ENCODE measurements at regions of chrX and their contacts with region 1.

Region 1: GRCh38 chrX:57918750-57919436 is 8.6 kb upstream of the ZXDA start:
- DNase-seq: no peak

Region 2: DNA sequence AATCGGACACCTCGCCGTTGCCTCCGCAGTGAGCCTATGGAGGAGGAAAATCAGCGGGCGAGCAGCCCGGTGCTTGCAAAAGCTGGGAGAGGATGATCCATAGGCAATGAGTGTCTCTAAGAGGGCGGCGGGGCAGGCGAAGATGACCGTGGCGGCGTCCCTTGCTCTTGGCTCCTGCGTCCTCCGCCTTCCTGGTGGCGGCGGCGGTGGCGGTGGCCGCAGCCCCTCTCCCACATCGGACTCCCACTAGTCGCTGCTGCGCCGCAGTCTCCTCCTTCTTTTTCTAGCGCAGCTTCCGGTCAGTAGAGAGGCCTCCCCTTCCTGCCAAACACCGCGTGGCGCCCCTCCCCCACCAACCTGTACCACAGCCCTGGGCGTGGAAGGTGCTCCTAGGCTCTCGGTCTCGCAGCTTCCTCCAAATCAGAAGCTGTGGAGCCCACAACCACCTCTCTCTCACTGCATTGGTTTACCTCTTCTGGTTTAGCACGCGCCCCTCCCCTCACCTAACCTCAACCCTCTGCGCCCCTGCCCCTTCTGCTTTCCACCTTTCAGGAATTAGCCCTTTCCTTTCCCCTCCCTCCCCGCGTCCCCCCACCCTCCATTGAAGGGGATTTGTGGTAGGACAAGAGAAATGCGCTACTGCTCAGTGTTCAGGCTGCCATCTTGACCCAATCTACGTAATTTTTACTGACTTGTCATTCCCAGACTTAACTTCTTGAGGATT is 923.5 kb before region 1 on chrX and contains the start of gene SPIN3:
- intact Hi-C with region 1: no loop called
- DNase-seq: peak; percentile 90
- total RNA-seq, gene SPIN3: 7.6 to 13.8 TPM

Region 3: DNA sequence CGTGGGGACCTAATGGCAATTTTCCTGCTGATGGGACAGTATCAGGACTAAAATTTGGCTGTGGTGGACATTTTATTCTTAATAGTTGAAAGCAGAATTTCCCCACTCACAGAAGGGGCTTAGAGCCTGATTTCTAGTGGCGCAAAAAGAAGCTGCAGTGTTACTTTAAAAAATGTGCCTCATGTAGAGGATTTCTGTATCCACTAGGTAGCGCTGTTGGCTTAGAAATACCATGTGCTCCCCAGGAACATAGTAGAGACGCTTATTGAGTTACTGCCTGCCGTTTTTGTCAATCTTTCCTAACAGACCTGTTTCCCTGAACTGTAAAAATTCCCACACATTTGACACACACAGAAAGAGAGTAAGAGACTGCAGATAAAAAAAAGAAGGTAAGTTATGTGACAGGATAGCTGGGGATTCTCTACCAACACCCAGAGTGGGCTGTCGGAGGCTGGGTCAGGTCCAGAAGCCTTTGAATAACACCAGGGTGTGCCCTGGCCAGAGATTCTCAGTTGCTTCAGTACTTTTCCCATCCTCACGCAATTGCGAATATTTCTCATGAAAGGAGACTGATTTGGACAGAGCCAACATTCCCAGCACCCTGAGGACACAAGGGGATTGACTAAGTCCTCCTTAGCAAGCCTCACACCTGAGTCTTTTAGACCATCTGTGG is 97.1 kb before region 1 on chrX:
- intact Hi-C with region 1: loop called (anchors 5 to 10 kb)
- DNase-seq: no peak

Region 4: DNA sequence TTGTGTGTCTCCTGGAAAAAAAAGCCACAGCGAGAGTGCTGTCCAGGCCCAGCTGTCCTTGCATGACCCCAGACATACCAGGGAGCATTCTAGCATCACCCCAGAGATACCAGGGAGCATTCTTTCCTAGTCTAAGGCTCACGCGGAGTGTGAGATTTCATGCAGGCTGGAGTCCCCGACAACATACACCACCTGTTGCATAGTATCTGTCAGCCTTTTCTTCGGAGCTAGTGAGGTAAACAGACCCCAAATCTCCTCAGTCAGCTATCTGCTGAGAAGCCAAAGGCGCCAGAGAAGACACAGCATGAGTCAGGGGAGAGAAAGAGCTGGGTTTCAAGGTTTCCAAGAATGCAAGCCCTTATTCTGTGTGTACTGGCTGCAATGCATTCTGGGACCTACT is 14.4 kb after region 1 on chrX:
- intact Hi-C with region 1: no loop called
- DNase-seq: no peak

Measured in posterior vena cava (tissue), 2 donors.